Activated B cell treated with CpG ODN at 0.5 μM for 24 hours (primary cell): ENCODE measurements at regions of chr20 and their contacts with region 1.

Region 1: GRCh38 chr20:35741892-35742740 is at the start of gene RBM39:
- DNase-seq: peak; percentile 94
- ATAC-seq: peak; percentile 81
- H3K4me3 Mint-ChIP-seq: peak within 1 kb of the TSS; percentile 99
- H3K27ac Mint-ChIP-seq: peak within 1 kb of the TSS; percentile 99
- H3K4me1 Mint-ChIP-seq: peaks cover 46% of the 10 kb centered on the region
- H3K27me3 Mint-ChIP-seq: no peaks in the 10 kb centered on the region
- CTCF ChIP-seq: no peak
- total RNA-seq, gene RBM39: 432 and 483 TPM in 2 replicates

Region 2: GRCh38 chr20:34210271-34210670 is 1531.8 kb before region 1 on chr20:
- CTCF ChIA-PET with region 1: no interaction called
- POLR2A ChIA-PET with region 1: no interaction called
- intact Hi-C with region 1: no loop called
- DNase-seq: no peak
- ATAC-seq: no peak
- H3K4me3 Mint-ChIP-seq: no peak overlapping the region
- H3K27ac Mint-ChIP-seq: no peak overlapping the region
- H3K4me1 Mint-ChIP-seq: no peaks in the 10 kb centered on the region
- H3K27me3 Mint-ChIP-seq: peaks cover 8% of the 10 kb centered on the region
- CTCF ChIP-seq: no peak

Region 3: DNA sequence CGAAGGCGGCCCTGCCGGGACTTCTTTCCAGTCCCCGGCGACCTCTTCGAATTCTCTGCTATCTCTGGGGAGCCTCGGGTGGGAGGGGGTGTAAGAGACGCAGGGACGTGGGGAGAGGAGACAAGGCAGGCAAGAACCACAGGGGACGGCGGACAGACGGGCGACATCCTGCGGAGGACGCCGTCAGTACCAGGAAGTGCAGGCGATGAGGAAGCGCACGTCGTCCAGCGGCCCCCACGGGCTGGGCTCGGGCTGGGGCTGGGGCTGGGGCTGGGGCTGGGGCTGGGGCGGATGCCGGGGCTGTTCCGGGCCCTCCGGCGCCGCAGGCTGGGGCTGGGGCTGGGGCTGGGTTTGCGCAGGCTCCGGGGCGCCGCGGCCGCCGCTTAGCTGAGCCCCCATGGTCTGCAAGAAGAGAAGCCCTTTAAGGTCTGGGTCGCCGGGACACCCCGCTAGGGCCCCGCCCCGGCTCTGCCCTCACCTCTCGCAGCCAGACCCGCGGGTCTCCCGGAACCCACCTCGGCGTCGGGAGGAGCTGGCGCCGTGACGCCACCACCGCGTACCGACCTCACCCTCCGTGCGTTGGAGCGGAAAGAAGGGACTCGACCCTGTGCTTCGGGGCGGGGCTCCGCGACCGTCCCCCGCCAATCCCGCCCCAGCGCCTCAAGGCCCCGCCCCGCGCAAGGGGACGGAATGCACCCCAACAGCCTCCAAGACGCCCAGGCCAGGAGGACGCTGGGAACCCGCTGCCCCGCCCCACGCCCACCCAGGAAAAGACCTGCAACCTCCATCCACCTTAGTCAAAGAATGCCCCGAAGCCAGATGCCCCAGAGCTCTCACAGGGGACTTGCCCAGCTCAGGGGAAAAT is 464.4 kb before region 1 on chr20 and contains the start of gene MMP24OS:
- CTCF ChIA-PET with region 1: no interaction called
- POLR2A ChIA-PET with region 1: interaction called, 10 read pairs
- intact Hi-C with region 1: no loop called
- DNase-seq: peak; percentile 85
- ATAC-seq: peak; percentile 90
- H3K4me3 Mint-ChIP-seq: peak within 1 kb of the TSS; percentile 97
- H3K27ac Mint-ChIP-seq: peak within 1 kb of the TSS; percentile 99
- H3K4me1 Mint-ChIP-seq: peaks cover 31% of the 10 kb centered on the region
- H3K27me3 Mint-ChIP-seq: no peaks in the 10 kb centered on the region
- CTCF ChIP-seq: no peak
- total RNA-seq, gene MMP24OS: 39.2 and 47.9 TPM in 2 replicates

Region 4: GRCh38 chr20:35432430-35432735 is 309.7 kb before region 1 on chr20:
- CTCF ChIA-PET with region 1: no interaction called
- POLR2A ChIA-PET with region 1: no interaction called
- intact Hi-C with region 1: no loop called
- DNase-seq: no peak
- ATAC-seq: no peak
- H3K4me3 Mint-ChIP-seq: no peak overlapping the region
- H3K27ac Mint-ChIP-seq: no peak overlapping the region
- H3K4me1 Mint-ChIP-seq: no peaks in the 10 kb centered on the region
- H3K27me3 Mint-ChIP-seq: no peaks in the 10 kb centered on the region
- CTCF ChIP-seq: no peak

Region 5: GRCh38 chr20:35541783-35542588 is 200.1 kb before region 1 on chr20 and contains the start of gene ERGIC3:
- CTCF ChIA-PET with region 1: no interaction called
- POLR2A ChIA-PET with region 1: interaction called, 18 read pairs
- intact Hi-C with region 1: loop called (anchors 1 kb)
- DNase-seq: peak; percentile 97
- ATAC-seq: peak; percentile 92
- H3K4me3 Mint-ChIP-seq: peak within 1 kb of the TSS; percentile 92
- H3K27ac Mint-ChIP-seq: peak within 1 kb of the TSS; percentile 77
- H3K4me1 Mint-ChIP-seq: peaks cover 21% of the 10 kb centered on the region
- H3K27me3 Mint-ChIP-seq: no peaks in the 10 kb centered on the region
- CTCF ChIP-seq: no peak
- total RNA-seq, gene ERGIC3: 159 and 183 TPM in 2 replicates

Region 6: GRCh38 chr20:35699127-35699975 is 42.8 kb before region 1 on chr20 and contains the starts of genes NFS1 and ROMO1:
- CTCF ChIA-PET with region 1: no interaction called
- POLR2A ChIA-PET with region 1: interaction called, 47 read pairs
- intact Hi-C with region 1: loop called (anchors 1 kb)
- DNase-seq: peak; percentile 85
- ATAC-seq: peak; percentile 90
- H3K4me3 Mint-ChIP-seq: peak within 1 kb of the TSS; percentile 97
- H3K27ac Mint-ChIP-seq: peak within 1 kb of the TSS; percentile 91
- H3K4me1 Mint-ChIP-seq: peaks cover 27% of the 10 kb centered on the region
- H3K27me3 Mint-ChIP-seq: no peaks in the 10 kb centered on the region
- CTCF ChIP-seq: no peak
- total RNA-seq, gene NFS1: 27.1 and 30.6 TPM in 2 replicates
- total RNA-seq, gene ROMO1: 96.8 and 131 TPM in 2 replicates

Region 7: GRCh38 chr20:35726759-35727711 is 15.1 kb before region 1 on chr20:
- CTCF ChIA-PET with region 1: interaction called, 5 read pairs
- POLR2A ChIA-PET with region 1: interaction called, 44 read pairs
- intact Hi-C with region 1: loop called (anchors 1 kb)
- DNase-seq: no peak
- ATAC-seq: no peak
- H3K4me3 Mint-ChIP-seq: no peak overlapping the region
- H3K27ac Mint-ChIP-seq: no peak overlapping the region
- H3K4me1 Mint-ChIP-seq: peaks cover 10% of the 10 kb centered on the region
- H3K27me3 Mint-ChIP-seq: no peaks in the 10 kb centered on the region
- CTCF ChIP-seq: no peak

Region 8: GRCh38 chr20:35791821-35792220 is 49.7 kb after region 1 on chr20:
- CTCF ChIA-PET with region 1: no interaction called
- POLR2A ChIA-PET with region 1: interaction called, 46 read pairs
- intact Hi-C with region 1: loop called (anchors 1 kb)
- DNase-seq: no peak
- ATAC-seq: no peak
- H3K4me3 Mint-ChIP-seq: no peak overlapping the region
- H3K27ac Mint-ChIP-seq: peak overlapping the region; percentile 5
- H3K4me1 Mint-ChIP-seq: peaks cover 22% of the 10 kb centered on the region
- H3K27me3 Mint-ChIP-seq: no peaks in the 10 kb centered on the region
- CTCF ChIP-seq: no peak